ENCODE measurements at regions of chr7 and their contacts with region 1.

Region 1: DNA sequence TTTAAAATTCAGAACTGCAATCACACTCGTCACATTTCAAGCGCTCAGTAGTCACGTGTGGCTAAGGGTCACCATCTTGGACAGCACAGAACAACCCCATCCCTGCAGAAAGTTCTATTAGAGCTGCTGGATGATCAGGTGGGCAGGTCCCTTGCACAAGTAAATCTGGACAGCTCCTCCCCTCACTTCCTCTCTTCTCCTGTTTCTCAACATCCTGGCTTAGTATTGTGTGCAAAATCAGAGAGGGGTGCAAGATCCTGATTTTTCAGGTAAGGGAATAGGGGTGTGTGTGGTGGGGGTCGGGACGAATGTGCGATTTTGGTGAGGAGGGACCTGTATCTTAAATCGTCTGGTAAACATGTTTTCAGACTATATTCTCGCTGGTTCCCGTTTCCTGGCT is at the start of gene GIMAP4:
- DNase-seq: no peak
- H3K4me3 Mint-ChIP-seq: peak within 1 kb of the TSS; percentile 96
- H3K27ac Mint-ChIP-seq: peak within 1 kb of the TSS; percentile 99
- H3K4me1 Mint-ChIP-seq: peaks cover 93% of the 10 kb centered on the region
- H3K27me3 Mint-ChIP-seq: no peaks in the 10 kb centered on the region
- total RNA-seq, gene GIMAP4: 84.2 and 87.4 TPM in 2 replicates

Region 2: GRCh38 chr7:150378853-150379440 is 188.2 kb before region 1 on chr7 and contains the start of gene ZNF775:
- intact Hi-C with region 1: loop called (anchors 5 kb)
- DNase-seq: peak; percentile 93
- H3K4me3 Mint-ChIP-seq: peak within 1 kb of the TSS; percentile 90
- H3K27ac Mint-ChIP-seq: peak within 1 kb of the TSS; percentile 83
- H3K4me1 Mint-ChIP-seq: peaks cover 59% of the 10 kb centered on the region
- H3K27me3 Mint-ChIP-seq: no peaks in the 10 kb centered on the region
- total RNA-seq, gene ZNF775: 3.9 and 4.5 TPM in 2 replicates

Region 3: GRCh38 chr7:150520145-150520544 is 47.0 kb before region 1 on chr7:
- intact Hi-C with region 1: loop called (anchors 1 kb)
- DNase-seq: peak; percentile 43
- H3K4me3 Mint-ChIP-seq: peak overlapping the region; percentile 96
- H3K27ac Mint-ChIP-seq: peak overlapping the region; percentile 93
- H3K4me1 Mint-ChIP-seq: peaks cover 65% of the 10 kb centered on the region
- H3K27me3 Mint-ChIP-seq: no peaks in the 10 kb centered on the region

Region 4: GRCh38 chr7:150586785-150587152 is 19.6 kb after region 1 on chr7:
- intact Hi-C with region 1: loop called (anchors 2 kb)
- DNase-seq: no peak
- H3K4me3 Mint-ChIP-seq: peak overlapping the region; percentile 15
- H3K27ac Mint-ChIP-seq: peak overlapping the region; percentile 86
- H3K4me1 Mint-ChIP-seq: peaks cover 62% of the 10 kb centered on the region
- H3K27me3 Mint-ChIP-seq: no peaks in the 10 kb centered on the region

Region 5: GRCh38 chr7:150685219-150686029 is 118.3 kb after region 1 on chr7 and contains the start of gene GIMAP2:
- intact Hi-C with region 1: loop called (anchors 1 kb)
- DNase-seq: peak; percentile 39
- H3K4me3 Mint-ChIP-seq: peak within 1 kb of the TSS; percentile 93
- H3K27ac Mint-ChIP-seq: peak within 1 kb of the TSS; percentile 98
- H3K4me1 Mint-ChIP-seq: peaks cover 87% of the 10 kb centered on the region
- H3K27me3 Mint-ChIP-seq: no peaks in the 10 kb centered on the region
- total RNA-seq, gene GIMAP2: 24.7 and 29.7 TPM in 2 replicates

Region 6: DNA sequence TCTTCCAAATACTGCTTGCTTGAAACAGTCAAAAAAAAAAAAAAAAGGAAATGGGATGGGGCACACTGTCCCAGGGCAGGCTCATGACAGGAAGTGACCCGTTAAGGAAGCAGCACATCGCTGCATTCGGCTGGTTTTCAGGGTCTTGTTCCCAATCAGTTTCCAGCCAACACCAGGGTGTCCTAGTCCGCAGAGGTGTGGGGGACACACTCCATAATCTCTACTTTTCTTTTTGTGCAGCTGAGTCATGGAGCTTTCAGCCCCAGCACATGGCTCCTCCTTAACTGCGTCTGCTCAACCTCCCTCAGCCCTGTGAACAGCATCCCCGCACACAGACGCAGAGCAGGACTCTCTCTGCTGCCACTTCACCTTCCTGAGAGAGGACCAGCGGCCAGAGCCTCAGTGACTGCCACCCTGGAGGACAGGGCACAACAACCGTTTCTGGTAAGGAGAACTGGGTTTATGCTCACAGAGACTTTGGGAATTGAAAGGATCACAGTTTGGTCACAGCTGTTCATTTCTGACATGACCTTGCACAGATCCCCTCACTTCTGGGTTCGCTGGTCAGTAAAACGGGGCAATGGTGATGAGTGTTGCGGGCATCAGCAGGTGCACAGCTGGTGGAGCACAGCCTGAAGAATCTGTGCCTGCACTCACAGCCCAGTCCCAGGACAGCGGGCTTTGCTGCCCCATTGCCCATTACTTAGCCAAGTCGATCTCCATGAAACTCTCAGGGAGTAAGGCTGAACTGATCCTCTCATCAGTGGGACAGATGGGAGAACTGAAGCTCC is 170.3 kb after region 1 on chr7 and contains the start of gene GIMAP5:
- intact Hi-C with region 1: loop called (anchors 2 kb)
- DNase-seq: peak; percentile 51
- H3K4me3 Mint-ChIP-seq: peak within 1 kb of the TSS; percentile 97
- H3K27ac Mint-ChIP-seq: peak within 1 kb of the TSS; percentile 99
- H3K4me1 Mint-ChIP-seq: peaks cover 88% of the 10 kb centered on the region
- H3K27me3 Mint-ChIP-seq: no peaks in the 10 kb centered on the region
- total RNA-seq, gene GIMAP5: 53.8 and 59.7 TPM in 2 replicates

Measured in activated T-helper 1 cell treated with anti-CD3 and anti-CD28 coated beads, Interleukin-12 subunit alpha, Interleukin-12 subunit beta, Interleukin-2, Interleukin-4 antibody, amounts not matched to agents 30 ng/mL and 10 ng/mL and 1 ng/mL, durations not matched to agents 14 hours and 24 hours and 36 hours (primary cell).